Naive thymus-derived CD4-positive, alpha-beta T cell (primary cell): ENCODE measurements at regions of chr9 and their contacts with region 1.

Region 1: DNA sequence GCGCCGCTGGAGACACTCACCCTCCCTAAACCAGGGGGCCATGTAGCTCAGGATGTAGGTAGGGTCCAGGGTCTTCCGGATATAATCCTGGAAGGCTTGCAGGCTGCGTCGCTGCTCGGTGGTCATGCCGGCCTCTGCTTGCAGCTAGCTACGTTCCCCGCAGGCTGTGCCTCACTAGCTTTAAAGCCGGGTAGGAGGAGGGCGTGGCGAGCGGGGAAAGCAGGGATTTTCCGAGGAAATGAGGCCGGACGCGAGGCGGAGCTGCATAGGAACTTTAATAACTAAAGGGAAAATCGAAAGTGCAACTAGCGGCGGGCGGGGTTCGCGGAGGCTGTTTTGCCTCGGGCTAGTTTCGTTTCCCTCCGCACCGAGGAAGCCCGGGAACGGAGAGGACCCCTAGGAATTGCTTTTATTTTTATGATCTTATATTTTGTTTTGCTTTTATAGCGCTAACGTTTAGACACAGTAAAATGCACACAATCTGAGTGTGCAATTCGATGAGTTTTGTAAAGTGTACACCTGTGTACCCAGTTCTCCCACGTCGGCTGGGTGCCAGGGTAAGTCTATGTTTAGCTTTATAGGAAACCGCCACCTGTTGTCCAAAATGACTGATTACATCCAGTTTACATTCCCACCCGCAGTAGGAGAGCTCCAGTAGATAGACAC is at the start of gene RIGI:
- DNase-seq: peak; percentile 52 to 85 (median 77)
- ATAC-seq: peak; percentile 84
- H3K4me3 ChIP-seq: peak within 1 kb of the TSS; percentile 98
- H3K4me3 Mint-ChIP-seq: peak within 1 kb of the TSS; percentile 83 to 99 (median 96)
- H3K27ac ChIP-seq: peak within 1 kb of the TSS; percentile 90
- H3K27ac Mint-ChIP-seq: peak within 1 kb of the TSS; percentile 84 to 98 (median 91)
- H3K4me1 ChIP-seq: peaks cover 9 to 29% of the 10 kb centered on the region in 2 donors
- H3K4me1 Mint-ChIP-seq: peaks cover 35 to 61% (median 58%) of the 10 kb centered on the region in 7 donors
- H3K27me3 ChIP-seq: no peaks in the 10 kb centered on the region
- H3K27me3 Mint-ChIP-seq: no peaks in the 10 kb centered on the region
- total RNA-seq, gene RIGI: 8.6 to 29.6 (median 26.8) TPM

Region 2: DNA sequence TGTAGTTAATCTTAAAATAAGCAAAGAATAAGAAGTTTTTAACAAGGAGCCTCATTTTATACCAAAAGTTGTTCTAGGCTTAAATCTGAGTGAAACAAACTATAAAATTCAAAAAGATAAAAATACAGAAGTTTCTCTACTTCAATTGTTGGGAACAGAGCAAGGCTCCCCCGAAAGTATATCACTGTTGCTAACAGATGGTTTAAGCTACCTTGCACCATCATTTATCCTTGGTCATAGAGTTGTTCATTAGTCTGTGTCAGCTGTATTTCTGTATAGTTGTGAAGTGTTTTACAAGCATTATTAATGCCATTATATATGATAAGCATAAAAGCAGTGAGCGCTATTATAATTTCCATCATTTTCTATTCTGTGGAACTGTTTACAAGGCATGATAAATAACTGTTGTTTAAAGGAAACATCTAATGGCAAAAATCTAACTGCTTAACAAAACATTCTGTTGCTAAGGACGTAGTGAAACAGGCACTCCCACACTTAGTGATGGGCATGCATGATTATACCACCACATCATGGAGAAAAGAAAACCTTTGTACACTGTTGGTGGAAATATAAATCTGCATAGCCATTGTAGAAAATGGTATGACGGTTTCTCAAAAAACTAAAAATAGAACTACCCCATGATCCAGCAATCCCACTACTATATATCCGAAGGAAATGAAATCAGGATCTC is 165.0 kb before region 1 on chr9:
- CTCF ChIA-PET with region 1: no interaction called
- POLR2A ChIA-PET with region 1: no interaction called
- intact Hi-C with region 1: no loop called
- DNase-seq: no peak
- ATAC-seq: no peak
- H3K4me3 ChIP-seq: no peak overlapping the region
- H3K4me3 Mint-ChIP-seq: no peak overlapping the region
- H3K27ac ChIP-seq: no peak overlapping the region
- H3K27ac Mint-ChIP-seq: no peak overlapping the region
- H3K4me1 ChIP-seq: no peaks in the 10 kb centered on the region
- H3K4me1 Mint-ChIP-seq: no peaks in the 10 kb centered on the region
- H3K27me3 ChIP-seq: peaks cover 0 to 7% of the 10 kb centered on the region in 2 donors
- H3K27me3 Mint-ChIP-seq: peaks cover 3 to 17% (median 15%) of the 10 kb centered on the region in 5 donors

Region 3: GRCh38 chr9:32384364-32385151 is 141.6 kb before region 1 on chr9 and contains the start of gene ACO1:
- CTCF ChIA-PET with region 1: interaction called, 51 read pairs
- POLR2A ChIA-PET with region 1: interaction called, 13 read pairs
- intact Hi-C with region 1: loop called (anchors 1 kb)
- DNase-seq: peak; percentile 74 to 91 (median 83)
- ATAC-seq: peak; percentile 99
- H3K4me3 ChIP-seq: peak within 1 kb of the TSS; percentile 58
- H3K4me3 Mint-ChIP-seq: peak within 1 kb of the TSS; percentile 84 to 92 (median 88)
- H3K27ac ChIP-seq: peak within 1 kb of the TSS; percentile 70
- H3K27ac Mint-ChIP-seq: peak within 1 kb of the TSS in 8 of 9 donors; percentile 10 to 82 (median 58)
- H3K4me1 ChIP-seq: peaks cover 5 to 12% of the 10 kb centered on the region in 2 donors
- H3K4me1 Mint-ChIP-seq: peaks cover 13 to 29% (median 22%) of the 10 kb centered on the region in 7 donors
- H3K27me3 ChIP-seq: no peaks in the 10 kb centered on the region
- H3K27me3 Mint-ChIP-seq: peaks cover 0 to 31% (median 8%) of the 10 kb centered on the region in 5 donors
- total RNA-seq, gene ACO1: 4.7 to 10.5 (median 7.4) TPM

Region 4: GRCh38 chr9:32413424-32413823 is 112.8 kb before region 1 on chr9:
- CTCF ChIA-PET with region 1: no interaction called
- POLR2A ChIA-PET with region 1: no interaction called
- intact Hi-C with region 1: no loop called
- DNase-seq: no peak
- ATAC-seq: no peak
- H3K4me3 ChIP-seq: no peak overlapping the region
- H3K4me3 Mint-ChIP-seq: no peak overlapping the region
- H3K27ac ChIP-seq: no peak overlapping the region
- H3K27ac Mint-ChIP-seq: no peak overlapping the region
- H3K4me1 ChIP-seq: no peaks in the 10 kb centered on the region
- H3K4me1 Mint-ChIP-seq: no peaks in the 10 kb centered on the region
- H3K27me3 ChIP-seq: no peaks in the 10 kb centered on the region
- H3K27me3 Mint-ChIP-seq: no peaks in the 10 kb centered on the region

Region 5: GRCh38 chr9:32472344-32472743 is 53.8 kb before region 1 on chr9:
- CTCF ChIA-PET with region 1: no interaction called
- POLR2A ChIA-PET with region 1: no interaction called
- intact Hi-C with region 1: loop called in 1 of 2 experiments (anchors 5 kb)
- DNase-seq: no peak
- ATAC-seq: no peak
- H3K4me3 ChIP-seq: no peak overlapping the region
- H3K4me3 Mint-ChIP-seq: no peak overlapping the region
- H3K27ac ChIP-seq: no peak overlapping the region
- H3K27ac Mint-ChIP-seq: no peak overlapping the region
- H3K4me1 ChIP-seq: no peaks in the 10 kb centered on the region
- H3K4me1 Mint-ChIP-seq: peaks cover 0 to 5% (median 0%) of the 10 kb centered on the region in 7 donors
- H3K27me3 ChIP-seq: no peaks in the 10 kb centered on the region
- H3K27me3 Mint-ChIP-seq: no peaks in the 10 kb centered on the region

Region 6: GRCh38 chr9:32502464-32502863 is 23.7 kb before region 1 on chr9:
- CTCF ChIA-PET with region 1: no interaction called
- POLR2A ChIA-PET with region 1: interaction called, 7 read pairs
- intact Hi-C with region 1: loop called in 1 of 2 experiments (anchors 1 kb)
- DNase-seq: no peak
- ATAC-seq: no peak
- H3K4me3 ChIP-seq: no peak overlapping the region
- H3K4me3 Mint-ChIP-seq: no peak overlapping the region
- H3K27ac ChIP-seq: no peak overlapping the region
- H3K27ac Mint-ChIP-seq: peak overlapping the region in 4 of 9 donors; percentile 23 to 81 (median 47)
- H3K4me1 ChIP-seq: peaks cover 0 to 3% of the 10 kb centered on the region in 2 donors
- H3K4me1 Mint-ChIP-seq: peaks cover 0 to 24% (median 11%) of the 10 kb centered on the region in 7 donors
- H3K27me3 ChIP-seq: no peaks in the 10 kb centered on the region
- H3K27me3 Mint-ChIP-seq: no peaks in the 10 kb centered on the region

Region 7: DNA sequence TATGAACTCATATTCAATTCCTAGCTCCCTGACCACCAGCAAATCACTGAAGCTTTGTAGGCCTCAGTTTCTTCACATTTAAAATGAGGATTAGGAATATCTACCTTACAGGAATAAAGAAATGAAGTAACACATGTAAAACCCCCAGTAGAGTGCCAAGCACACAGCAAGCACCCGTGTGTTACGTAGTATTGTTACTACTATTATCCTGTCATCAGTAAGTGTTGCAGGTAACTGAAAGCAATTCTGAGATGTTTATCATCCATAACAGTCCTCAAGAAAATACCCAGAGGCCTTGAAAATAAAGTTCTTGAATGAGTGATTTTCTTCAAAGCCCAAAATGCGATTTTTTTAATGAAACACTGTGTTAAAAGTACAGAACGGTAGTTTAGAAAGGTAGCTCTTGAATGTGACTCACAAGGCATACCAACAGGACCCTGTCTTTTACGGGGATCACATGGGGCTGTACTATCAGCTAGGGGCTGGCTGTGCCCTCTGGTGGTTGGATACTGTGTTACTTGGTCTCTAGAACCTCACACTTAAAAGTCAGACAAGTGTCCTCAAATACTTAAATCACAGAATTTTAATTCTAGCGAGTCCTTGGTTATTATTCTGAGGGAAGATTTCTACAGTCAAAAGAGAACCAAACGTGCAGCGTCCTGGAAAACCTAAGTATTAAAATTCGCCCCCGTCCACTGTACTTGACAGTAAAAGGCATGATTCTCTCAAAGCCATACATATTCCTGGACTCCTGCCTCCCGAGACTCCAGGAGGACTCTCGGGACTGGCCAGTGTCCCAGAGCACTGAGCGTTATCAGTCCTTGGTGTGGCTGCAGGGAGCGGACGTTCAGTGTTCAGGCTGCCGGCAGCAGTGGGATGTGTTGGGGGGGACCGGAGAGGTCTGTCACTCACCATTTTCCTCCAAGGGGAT is 46.1 kb after region 1 on chr9:
- CTCF ChIA-PET with region 1: interaction called, 14 read pairs
- POLR2A ChIA-PET with region 1: interaction called, 19 read pairs
- intact Hi-C with region 1: loop called (anchors 1 kb)
- DNase-seq: peak; percentile 33 to 85 (median 77)
- ATAC-seq: peak; percentile 92
- H3K4me3 ChIP-seq: peak overlapping the region; percentile 92
- H3K4me3 Mint-ChIP-seq: peak overlapping the region; percentile 98 to 100 (median 99)
- H3K27ac ChIP-seq: peak overlapping the region; percentile 86
- H3K27ac Mint-ChIP-seq: peak overlapping the region; percentile 93 to 99 (median 99)
- H3K4me1 ChIP-seq: peaks cover 14 to 22% of the 10 kb centered on the region in 2 donors
- H3K4me1 Mint-ChIP-seq: peaks cover 18 to 43% (median 30%) of the 10 kb centered on the region in 7 donors
- H3K27me3 ChIP-seq: no peaks in the 10 kb centered on the region
- H3K27me3 Mint-ChIP-seq: peaks cover 0 to 10% (median 0%) of the 10 kb centered on the region in 5 donors